ENCODE measurements at regions of chr4 and their contacts with region 1.

Region 1: DNA sequence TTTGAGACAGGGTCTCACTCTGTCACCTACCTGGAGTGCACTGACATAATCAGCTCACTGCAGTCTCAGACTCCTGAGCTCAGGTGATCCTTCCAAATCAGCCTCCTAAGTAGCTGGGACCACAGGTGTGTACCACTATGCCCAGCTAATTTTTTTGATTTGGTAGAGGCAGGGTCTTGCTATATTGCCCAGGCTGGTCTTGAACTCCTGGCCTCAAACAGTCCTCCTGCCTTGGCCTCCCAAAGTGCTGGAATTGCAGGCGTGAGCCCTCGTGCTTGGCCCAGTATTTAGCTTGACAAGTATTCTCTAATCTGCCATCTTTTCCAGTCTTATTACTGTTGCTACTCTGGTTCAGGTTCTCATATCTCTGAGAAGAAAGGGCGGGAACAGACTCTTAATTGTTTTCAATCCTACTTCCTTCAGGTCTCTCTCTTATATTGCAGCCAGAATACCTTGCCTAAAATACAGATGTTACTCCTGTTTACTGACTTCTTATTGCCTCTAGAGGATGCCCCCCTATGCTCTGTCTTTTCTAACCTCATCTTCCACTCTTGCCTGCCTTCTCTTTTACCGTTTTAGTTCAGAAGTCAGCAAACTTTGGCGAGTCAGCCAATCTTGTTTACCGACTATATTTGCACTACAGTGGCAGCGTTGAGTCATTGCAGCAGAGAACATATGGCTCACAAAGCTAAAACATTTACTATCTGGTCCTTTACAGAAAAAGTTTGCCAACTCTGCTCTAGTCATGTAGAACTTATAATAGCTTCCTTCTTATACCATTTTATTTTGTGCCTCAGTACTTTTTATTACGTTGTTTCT is 19.0 kb downstream of the MRPL1 start:
- DNase-seq: peak; percentile 48
- H3K4me3 Mint-ChIP-seq: peak overlapping the region; percentile 26
- H3K27ac Mint-ChIP-seq: peak overlapping the region; percentile 87
- H3K4me1 Mint-ChIP-seq: peaks cover 22% of the 10 kb centered on the region
- H3K27me3 Mint-ChIP-seq: no peaks in the 10 kb centered on the region
- CTCF ChIP-seq: peak; percentile 7

Region 2: GRCh38 chr4:77893451-77893850 is 11.8 kb after region 1 on chr4:
- CTCF ChIA-PET with region 1: interaction called, 4 read pairs
- POLR2A ChIA-PET with region 1: interaction called, 14 read pairs
- intact Hi-C with region 1: no loop called
- DNase-seq: no peak
- H3K4me3 Mint-ChIP-seq: no peak overlapping the region
- H3K27ac Mint-ChIP-seq: no peak overlapping the region
- H3K4me1 Mint-ChIP-seq: no peaks in the 10 kb centered on the region
- H3K27me3 Mint-ChIP-seq: no peaks in the 10 kb centered on the region
- CTCF ChIP-seq: no peak

Region 3: DNA sequence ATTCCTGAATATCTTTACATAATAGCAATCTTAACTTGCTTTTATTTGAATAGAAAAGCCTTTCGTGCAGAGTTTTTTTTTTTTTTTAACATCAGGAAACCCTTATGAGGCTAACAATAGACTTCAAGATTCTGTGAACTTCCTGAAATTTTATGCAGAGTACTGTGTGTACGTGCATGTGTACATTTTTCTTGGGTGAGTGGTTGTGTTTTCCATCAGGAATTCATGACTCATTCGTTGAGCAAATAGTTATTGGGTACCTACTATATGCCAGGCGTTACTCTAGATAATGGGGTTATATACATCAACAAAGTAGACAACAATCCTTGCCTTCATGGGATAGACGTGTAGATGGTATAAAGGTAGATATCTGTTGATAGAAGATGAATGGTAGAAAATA is 40.0 kb after region 1 on chr4:
- CTCF ChIA-PET with region 1: interaction called, 3 read pairs
- POLR2A ChIA-PET with region 1: interaction called, 71 read pairs
- intact Hi-C with region 1: no loop called
- DNase-seq: peak; percentile 87
- H3K4me3 Mint-ChIP-seq: no peak overlapping the region
- H3K27ac Mint-ChIP-seq: peak overlapping the region; percentile 95
- H3K4me1 Mint-ChIP-seq: peaks cover 37% of the 10 kb centered on the region
- H3K27me3 Mint-ChIP-seq: no peaks in the 10 kb centered on the region
- CTCF ChIP-seq: no peak

Region 4: GRCh38 chr4:77927991-77928925 is 46.6 kb after region 1 on chr4:
- CTCF ChIA-PET with region 1: interaction called, 5 read pairs
- POLR2A ChIA-PET with region 1: interaction called, 71 read pairs
- intact Hi-C with region 1: no loop called
- DNase-seq: peak; percentile 92
- H3K4me3 Mint-ChIP-seq: no peak overlapping the region
- H3K27ac Mint-ChIP-seq: peak overlapping the region; percentile 73
- H3K4me1 Mint-ChIP-seq: peaks cover 27% of the 10 kb centered on the region
- H3K27me3 Mint-ChIP-seq: no peaks in the 10 kb centered on the region
- CTCF ChIP-seq: no peak

Region 5: GRCh38 chr4:77996076-77996475 is 114.4 kb after region 1 on chr4:
- CTCF ChIA-PET with region 1: no interaction called
- POLR2A ChIA-PET with region 1: no interaction called
- intact Hi-C with region 1: no loop called
- DNase-seq: no peak
- H3K4me3 Mint-ChIP-seq: no peak overlapping the region
- H3K27ac Mint-ChIP-seq: no peak overlapping the region
- H3K4me1 Mint-ChIP-seq: peaks cover 6% of the 10 kb centered on the region
- H3K27me3 Mint-ChIP-seq: no peaks in the 10 kb centered on the region
- CTCF ChIP-seq: no peak

Measured in MCF 10A (cell line).